IMR-90 (cell line): ENCODE measurements at regions of chr4 and their contacts with region 1.

Region 1: DNA sequence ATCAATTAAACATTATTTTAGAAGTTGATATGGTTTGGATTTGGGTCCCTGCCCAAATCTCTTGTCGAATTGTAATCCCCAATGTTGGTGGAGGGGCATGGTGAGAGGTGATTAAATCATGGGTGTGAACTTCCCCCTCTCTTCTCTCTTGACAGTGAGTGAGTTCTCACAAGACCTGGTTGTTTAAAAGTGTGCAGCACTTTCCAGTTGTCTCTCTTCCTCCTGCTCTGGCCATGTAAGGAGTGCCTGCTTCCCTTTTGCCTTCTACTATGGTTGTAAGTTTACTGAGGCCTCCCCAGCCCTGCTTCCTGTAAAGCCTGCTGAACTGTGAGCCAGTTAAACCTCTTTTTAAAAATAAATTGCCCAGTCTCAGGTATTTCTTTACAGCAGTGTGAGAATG is 141.4 kb downstream of the GALNTL6 start:
- DNase-seq: no peak
- ATAC-seq: no peak
- H3K4me3 ChIP-seq: no peak overlapping the region
- H3K27ac ChIP-seq: no peak overlapping the region
- H3K4me1 ChIP-seq: no peaks in the 10 kb centered on the region
- H3K27me3 ChIP-seq: no peaks in the 10 kb centered on the region
- CTCF ChIP-seq: no peak
- POLR2A ChIP-seq: no peak
- RAD21 ChIP-seq: no peak

Region 2: DNA sequence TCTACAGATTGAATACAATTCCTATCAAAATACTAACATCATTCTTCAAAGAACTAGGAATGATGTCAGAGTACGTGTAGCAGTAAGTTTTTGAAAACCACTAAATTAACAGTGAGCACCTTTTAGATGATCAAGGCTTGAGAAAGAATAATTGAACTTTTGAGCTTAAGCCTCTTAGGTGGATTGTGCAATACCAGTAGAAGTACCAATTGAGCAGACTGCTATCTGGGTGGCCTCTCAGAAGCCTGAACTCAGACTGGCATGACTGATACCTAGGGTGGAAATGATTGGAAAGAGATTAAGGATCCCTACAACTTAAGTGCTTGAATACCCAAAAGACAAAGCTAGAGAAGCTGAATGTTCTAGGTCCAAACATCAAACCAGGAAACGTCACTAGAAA is 341.7 kb before region 1 on chr4:
- CTCF ChIA-PET with region 1: no interaction called
- POLR2A ChIA-PET with region 1: no interaction called
- dilution Hi-C with region 1: no loop called
- in situ Hi-C with region 1: no loop called
- intact Hi-C with region 1: no loop called
- DNase-seq: no peak
- ATAC-seq: no peak
- H3K4me3 ChIP-seq: no peak overlapping the region
- H3K27ac ChIP-seq: no peak overlapping the region
- H3K4me1 ChIP-seq: no peaks in the 10 kb centered on the region
- H3K27me3 ChIP-seq: no peaks in the 10 kb centered on the region
- CTCF ChIP-seq: no peak
- POLR2A ChIP-seq: no peak
- RAD21 ChIP-seq: no peak

Region 3: DNA sequence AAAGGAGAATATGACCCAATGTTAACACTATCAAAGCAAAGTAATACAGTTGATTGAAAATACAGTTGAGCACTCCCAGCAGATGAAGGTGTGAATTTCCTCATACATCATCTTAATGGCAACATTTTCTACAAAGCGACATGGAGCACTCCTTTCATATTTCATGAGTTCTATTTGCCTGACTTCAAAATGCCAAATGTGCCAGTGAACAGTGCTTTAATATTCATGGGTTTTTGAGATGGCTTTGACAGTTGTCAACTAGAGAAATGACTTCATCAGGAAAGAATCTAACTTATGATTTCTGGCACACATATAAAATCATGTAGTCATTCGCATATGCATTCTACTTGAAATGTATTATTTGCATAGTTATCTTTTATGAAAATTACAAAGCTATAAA is 80.9 kb after region 1 on chr4:
- CTCF ChIA-PET with region 1: no interaction called
- POLR2A ChIA-PET with region 1: no interaction called
- dilution Hi-C with region 1: no loop called
- in situ Hi-C with region 1: no loop called
- intact Hi-C with region 1: loop called (anchors 5 kb)
- DNase-seq: no peak
- ATAC-seq: no peak
- H3K4me3 ChIP-seq: no peak overlapping the region
- H3K27ac ChIP-seq: no peak overlapping the region
- H3K4me1 ChIP-seq: no peaks in the 10 kb centered on the region
- H3K27me3 ChIP-seq: no peaks in the 10 kb centered on the region
- CTCF ChIP-seq: no peak
- POLR2A ChIP-seq: no peak
- RAD21 ChIP-seq: no peak

Region 4: DNA sequence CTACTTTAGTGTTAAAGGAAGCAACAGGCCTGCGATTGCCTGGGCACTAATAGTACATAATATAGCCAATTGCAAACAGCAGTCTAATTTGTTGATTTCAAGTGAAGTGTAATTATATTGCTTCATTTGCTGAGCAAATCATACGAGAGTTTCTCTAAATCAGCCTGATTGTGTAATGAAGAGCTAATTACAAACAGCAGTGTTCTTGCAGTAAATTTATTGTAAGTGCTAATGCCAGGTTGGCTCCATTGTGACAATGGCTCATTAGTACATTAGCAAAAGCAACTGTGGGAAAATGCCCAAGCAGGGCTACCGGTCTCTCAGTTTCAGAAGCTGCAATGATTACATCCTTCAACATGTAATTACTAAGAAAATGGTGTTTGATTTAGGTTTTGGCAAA is 450.0 kb after region 1 on chr4:
- CTCF ChIA-PET with region 1: no interaction called
- POLR2A ChIA-PET with region 1: no interaction called
- dilution Hi-C with region 1: no loop called
- in situ Hi-C with region 1: no loop called
- intact Hi-C with region 1: no loop called
- DNase-seq: no peak
- ATAC-seq: no peak
- H3K4me3 ChIP-seq: no peak overlapping the region
- H3K27ac ChIP-seq: no peak overlapping the region
- H3K4me1 ChIP-seq: no peaks in the 10 kb centered on the region
- H3K27me3 ChIP-seq: no peaks in the 10 kb centered on the region
- CTCF ChIP-seq: no peak
- POLR2A ChIP-seq: no peak
- RAD21 ChIP-seq: no peak